ENCODE measurements at regions of chr17 and their contacts with region 1.

Region 1: GRCh38 chr17:74987418-74987908 is at the start of gene CDR2L:
- DNase-seq: peak; percentile 81 to 97
- H3K4me3 ChIP-seq: peak within 1 kb of the TSS; percentile 84
- H3K27ac ChIP-seq: no peak within 1 kb of the TSS
- H3K4me1 ChIP-seq: peaks cover 39% of the 10 kb centered on the region
- H3K27me3 ChIP-seq: no peaks in the 10 kb centered on the region
- CTCF ChIP-seq: no peak
- total RNA-seq, gene CDR2L: 15.1 and 22.8 TPM in 2 replicates

Region 2: GRCh38 chr17:74945543-74945942 is 41.9 kb before region 1 on chr17:
- CTCF ChIA-PET with region 1: no interaction called
- POLR2A ChIA-PET with region 1: no interaction called
- intact Hi-C with region 1: no loop called
- DNase-seq: no peak
- H3K4me3 ChIP-seq: no peak overlapping the region
- H3K27ac ChIP-seq: no peak overlapping the region
- H3K4me1 ChIP-seq: peaks cover 29% of the 10 kb centered on the region
- H3K27me3 ChIP-seq: no peaks in the 10 kb centered on the region
- CTCF ChIP-seq: no peak

Region 3: GRCh38 chr17:75124041-75124818 is 136.8 kb after region 1 on chr17:
- CTCF ChIA-PET with region 1: no interaction called
- POLR2A ChIA-PET with region 1: interaction called, 20 read pairs
- intact Hi-C with region 1: no loop called
- DNase-seq: peak; percentile 97
- H3K4me3 ChIP-seq: peak overlapping the region; percentile 45; the same call in 1 of the 2 replicates
- H3K27ac ChIP-seq: peak overlapping the region; percentile 93
- H3K4me1 ChIP-seq: peaks cover 39% of the 10 kb centered on the region
- H3K27me3 ChIP-seq: no peaks in the 10 kb centered on the region
- CTCF ChIP-seq: no peak; the same call in 1 of the 2 replicates

Measured in PC-9 (cell line).